ENCODE measurements at regions of chr2 and their contacts with region 1.

Region 1: DNA sequence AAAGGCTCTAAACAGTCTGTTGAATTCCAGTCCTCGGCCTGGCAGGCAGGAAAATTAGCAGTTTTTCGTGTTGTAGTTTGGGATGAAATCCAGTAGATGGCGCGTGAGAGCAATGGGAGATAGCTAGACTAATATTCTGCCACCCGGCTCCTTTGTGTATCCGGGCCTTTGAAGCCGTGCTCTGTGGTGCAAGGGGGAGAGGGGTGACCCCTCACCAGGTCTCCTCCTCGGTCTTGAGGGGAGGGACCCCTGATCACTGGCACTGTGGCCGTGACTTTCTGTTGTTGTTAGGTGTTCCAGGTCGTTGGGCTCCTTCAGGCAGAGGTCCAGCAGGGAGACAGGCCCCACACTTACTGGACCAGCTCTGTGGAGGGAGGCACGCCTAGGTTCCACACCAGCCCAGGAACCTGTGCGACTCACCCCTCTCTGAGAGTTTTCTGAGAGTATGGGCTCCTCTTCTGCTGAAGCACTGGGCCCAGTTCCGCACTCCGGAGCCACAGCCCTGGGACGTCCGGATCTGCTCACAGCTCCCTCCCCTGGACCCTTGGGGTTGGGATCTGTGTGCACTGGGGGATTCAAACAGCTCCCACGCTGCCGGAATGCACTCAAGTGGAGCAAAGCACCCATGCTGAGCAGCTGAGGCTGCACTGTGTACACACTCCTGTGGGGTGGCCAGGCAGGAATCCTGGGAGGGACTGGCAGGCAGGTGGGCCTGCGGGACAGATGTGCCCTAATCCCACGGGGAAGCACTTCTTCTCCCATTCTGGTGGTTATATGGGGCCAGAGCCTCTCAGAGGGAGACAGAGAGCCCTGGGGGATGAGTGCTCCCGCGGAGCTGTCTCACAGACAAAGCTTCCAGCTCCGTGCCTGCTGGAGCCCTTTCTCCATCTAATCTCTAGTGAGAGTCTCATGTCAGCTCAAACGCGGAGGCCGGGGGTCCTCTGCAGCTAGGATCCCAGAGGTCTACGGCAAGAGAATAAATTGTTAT is 8.8 kb downstream of the GKN2 start:
- DNase-seq: peak in 1 of 2 experiments; percentile 88
- H3K4me3 ChIP-seq: peak overlapping the region; percentile 42 to 60 (median 50); a peak in 6 of 8 replicates
- H3K27ac ChIP-seq: no peak overlapping the region
- H3K4me1 ChIP-seq: peaks cover 0 to 6% (median 5%) of the 10 kb centered on the region in 4 experiments; a peak in 3 of 7 replicates
- H3K27me3 ChIP-seq: no peaks in the 10 kb centered on the region
- CTCF ChIP-seq: peak; percentile 17 to 76 (median 76)
- EP300 ChIP-seq: no peak
- POLR2A ChIP-seq: no peak
- RAD21 ChIP-seq: peak; percentile 56 to 79

Region 2: DNA sequence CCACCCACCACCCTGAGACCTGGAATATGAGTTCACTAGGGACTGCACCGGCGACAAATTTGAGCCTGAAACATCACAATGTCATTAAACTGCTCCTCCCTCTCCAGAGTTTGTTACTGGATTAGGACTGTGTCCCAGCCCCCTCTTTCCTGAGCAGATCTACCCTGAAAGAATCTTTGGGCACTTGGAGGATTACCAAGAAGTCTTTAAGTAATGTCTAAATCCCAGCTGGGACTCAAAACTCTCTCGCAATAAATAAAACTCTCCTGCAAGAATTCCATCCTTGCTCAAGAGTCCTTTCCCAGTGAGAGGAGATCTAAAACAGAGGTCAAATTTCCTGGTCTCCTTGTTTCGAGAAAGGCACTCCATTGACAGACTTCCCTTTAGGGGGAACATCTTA is 12.1 kb before region 1 on chr2:
- CTCF ChIA-PET with region 1: interaction called, 39 read pairs
- POLR2A ChIA-PET with region 1: interaction called, 3 read pairs
- DNase-seq: no peak
- H3K4me3 ChIP-seq: no peak overlapping the region
- H3K27ac ChIP-seq: no peak overlapping the region
- H3K4me1 ChIP-seq: no peaks in the 10 kb centered on the region
- H3K27me3 ChIP-seq: no peaks in the 10 kb centered on the region
- CTCF ChIP-seq: no peak
- EP300 ChIP-seq: no peak
- POLR2A ChIP-seq: no peak
- RAD21 ChIP-seq: no peak

Region 3: GRCh38 chr2:69012310-69013141 is 68.7 kb after region 1 on chr2:
- CTCF ChIA-PET with region 1: interaction called, 14 read pairs
- POLR2A ChIA-PET with region 1: no interaction called
- DNase-seq: peak in 1 of 2 experiments; percentile 64
- H3K4me3 ChIP-seq: peak overlapping the region; percentile 85 to 98 (median 96)
- H3K27ac ChIP-seq: no peak overlapping the region
- H3K4me1 ChIP-seq: peaks cover 3 to 4% (median 3%) of the 10 kb centered on the region in 4 experiments; a peak in 3 of 7 replicates
- H3K27me3 ChIP-seq: peaks cover 0 to 10% (median 4%) of the 10 kb centered on the region in 4 experiments; a peak in 4 of 7 replicates
- CTCF ChIP-seq: peak; percentile 45 to 64 (median 51)
- EP300 ChIP-seq: no peak
- POLR2A ChIP-seq: no peak
- RAD21 ChIP-seq: peak; percentile 27 to 39

Region 4: GRCh38 chr2:69253611-69254288 is 309.9 kb after region 1 on chr2:
- CTCF ChIA-PET with region 1: no interaction called
- POLR2A ChIA-PET with region 1: no interaction called
- DNase-seq: no peak
- H3K4me3 ChIP-seq: no peak overlapping the region
- H3K27ac ChIP-seq: no peak overlapping the region
- H3K4me1 ChIP-seq: no peaks in the 10 kb centered on the region
- H3K27me3 ChIP-seq: no peaks in the 10 kb centered on the region
- CTCF ChIP-seq: no peak
- EP300 ChIP-seq: no peak
- POLR2A ChIP-seq: no peak
- RAD21 ChIP-seq: no peak

Measured in H1 (cell line).